CD4-positive, alpha-beta memory T cell (primary cell): ENCODE measurements at regions of chr20 and their contacts with region 1.

Region 1: GRCh38 chr20:4740774-4741431 is 19.2 kb downstream of the PRND start:
- DNase-seq: peak; percentile 43 to 58 (median 52)
- H3K4me3 ChIP-seq: no peak overlapping the region
- H3K4me3 Mint-ChIP-seq: no peak overlapping the region
- H3K27ac ChIP-seq: no peak overlapping the region
- H3K27ac Mint-ChIP-seq: peak overlapping the region in 1 of 7 donors; percentile 9
- H3K4me1 ChIP-seq: no peaks in the 10 kb centered on the region
- H3K4me1 Mint-ChIP-seq: peaks cover 0 to 8% (median under 1%) of the 10 kb centered on the region in 4 donors
- H3K27me3 ChIP-seq: peaks cover under 1% of the 10 kb centered on the region
- H3K27me3 Mint-ChIP-seq: peaks cover 3 to 13% of the 10 kb centered on the region in 2 donors

Region 2: DNA sequence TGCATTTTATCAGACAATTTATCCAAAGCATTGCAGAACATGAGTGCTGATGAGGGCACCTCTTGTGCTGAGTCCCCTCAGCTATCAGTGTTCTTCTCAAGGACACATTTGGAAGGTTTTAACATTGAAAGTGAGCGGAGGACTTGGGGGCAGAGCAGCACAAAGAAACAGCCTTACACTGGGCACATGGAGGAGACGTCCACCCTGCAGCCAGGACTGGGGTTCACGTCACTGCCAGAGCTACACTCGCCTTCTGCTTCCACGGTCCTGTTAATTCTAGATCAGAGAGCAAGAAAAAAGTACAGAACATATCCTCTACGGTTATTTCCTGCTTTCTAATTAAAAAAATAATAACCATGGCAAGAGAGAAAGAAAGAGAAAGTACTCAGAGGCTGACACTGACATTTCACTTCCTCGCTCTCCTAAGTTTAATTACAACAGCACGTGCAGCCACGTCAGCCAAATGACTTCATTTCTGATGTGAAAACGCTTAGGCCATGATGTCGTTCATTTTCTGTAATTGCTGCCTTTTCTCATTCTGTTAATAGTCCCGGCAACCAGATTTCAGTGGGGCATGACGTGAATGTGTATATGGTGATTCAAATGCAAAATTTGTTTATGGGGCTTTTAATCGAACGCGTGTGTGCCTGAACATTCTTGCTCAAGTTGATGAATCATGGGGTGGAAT is 14.0 kb before region 1 on chr20:
- CTCF ChIA-PET with region 1: interaction called, 18 read pairs
- POLR2A ChIA-PET with region 1: no interaction called
- intact Hi-C with region 1: no loop called
- DNase-seq: peak; percentile 51 to 78 (median 63)
- H3K4me3 ChIP-seq: peak overlapping the region in 1 of 2 donors; percentile 29
- H3K4me3 Mint-ChIP-seq: peak overlapping the region; percentile 51 to 82 (median 78)
- H3K27ac ChIP-seq: peak overlapping the region; percentile 30
- H3K27ac Mint-ChIP-seq: peak overlapping the region; percentile 49 to 96 (median 88)
- H3K4me1 ChIP-seq: peaks cover 20% of the 10 kb centered on the region
- H3K4me1 Mint-ChIP-seq: peaks cover 8 to 11% (median 9%) of the 10 kb centered on the region in 4 donors
- H3K27me3 ChIP-seq: no peaks in the 10 kb centered on the region
- H3K27me3 Mint-ChIP-seq: no peaks in the 10 kb centered on the region

Region 3: DNA sequence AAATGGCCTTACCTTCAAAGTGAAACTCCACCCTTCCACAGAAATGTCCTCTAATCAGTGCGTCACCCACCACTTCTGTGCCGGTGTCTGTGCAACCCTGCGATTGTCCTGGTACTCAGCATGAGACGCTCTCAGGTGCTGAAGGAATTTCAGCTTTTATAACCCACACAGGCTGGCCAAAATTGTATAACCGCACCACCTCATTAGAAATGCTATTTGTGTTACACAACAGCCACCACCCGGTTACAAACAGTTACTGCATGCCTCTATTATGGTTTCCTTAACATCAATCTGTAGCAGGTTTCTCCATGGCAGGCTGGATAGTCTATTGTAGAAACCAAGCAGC is 208.9 kb after region 1 on chr20:
- CTCF ChIA-PET with region 1: interaction called, 36 read pairs
- POLR2A ChIA-PET with region 1: no interaction called
- intact Hi-C with region 1: no loop called
- DNase-seq: peak; percentile 32 to 53 (median 42)
- H3K4me3 ChIP-seq: peak overlapping the region in 1 of 2 donors; percentile 20
- H3K4me3 Mint-ChIP-seq: peak overlapping the region; percentile 70 to 84 (median 79)
- H3K27ac ChIP-seq: no peak overlapping the region
- H3K27ac Mint-ChIP-seq: peak overlapping the region; percentile 8 to 94 (median 47)
- H3K4me1 ChIP-seq: peaks cover 6% of the 10 kb centered on the region
- H3K4me1 Mint-ChIP-seq: peaks cover 8 to 26% (median 14%) of the 10 kb centered on the region in 4 donors
- H3K27me3 ChIP-seq: no peaks in the 10 kb centered on the region
- H3K27me3 Mint-ChIP-seq: no peaks in the 10 kb centered on the region

Region 4: DNA sequence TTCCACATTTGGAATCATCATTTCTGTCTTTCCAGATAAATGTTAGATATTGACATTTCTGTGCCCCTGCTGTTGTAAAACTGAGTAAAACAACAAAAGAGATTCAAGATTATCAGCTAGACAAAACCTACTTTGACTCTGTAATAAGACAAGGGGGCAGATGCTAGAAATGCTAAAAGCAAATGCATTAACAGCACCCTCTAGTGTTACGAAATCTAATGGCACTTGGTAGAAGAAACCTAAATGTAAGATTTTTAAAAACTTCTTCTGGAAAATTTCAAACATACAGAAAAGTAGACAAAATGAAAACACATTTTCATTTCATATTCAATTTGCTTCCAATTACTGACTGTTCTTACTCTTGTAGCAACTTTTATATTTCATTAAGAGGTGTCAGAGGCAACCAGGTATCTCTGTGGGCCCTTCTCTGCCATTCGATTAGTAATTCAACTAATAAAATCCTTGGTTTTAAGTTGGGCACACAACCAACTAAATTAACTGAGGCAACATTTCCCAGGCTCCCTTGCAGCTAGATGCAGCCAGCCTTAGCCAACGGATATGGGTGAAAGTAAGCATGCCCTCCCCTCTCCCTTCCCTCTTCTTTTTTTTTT is 215.4 kb after region 1 on chr20:
- CTCF ChIA-PET with region 1: interaction called, 36 read pairs
- POLR2A ChIA-PET with region 1: no interaction called
- intact Hi-C with region 1: loop called (anchors 1 kb)
- DNase-seq: peak in 4 of 5 donors; percentile 47 to 63 (median 56)
- H3K4me3 ChIP-seq: no peak overlapping the region
- H3K4me3 Mint-ChIP-seq: no peak overlapping the region
- H3K27ac ChIP-seq: no peak overlapping the region
- H3K27ac Mint-ChIP-seq: peak overlapping the region in 1 of 7 donors; percentile 19
- H3K4me1 ChIP-seq: peaks cover 3% of the 10 kb centered on the region
- H3K4me1 Mint-ChIP-seq: peaks cover 2 to 11% (median 4%) of the 10 kb centered on the region in 4 donors
- H3K27me3 ChIP-seq: no peaks in the 10 kb centered on the region
- H3K27me3 Mint-ChIP-seq: no peaks in the 10 kb centered on the region

Region 5: DNA sequence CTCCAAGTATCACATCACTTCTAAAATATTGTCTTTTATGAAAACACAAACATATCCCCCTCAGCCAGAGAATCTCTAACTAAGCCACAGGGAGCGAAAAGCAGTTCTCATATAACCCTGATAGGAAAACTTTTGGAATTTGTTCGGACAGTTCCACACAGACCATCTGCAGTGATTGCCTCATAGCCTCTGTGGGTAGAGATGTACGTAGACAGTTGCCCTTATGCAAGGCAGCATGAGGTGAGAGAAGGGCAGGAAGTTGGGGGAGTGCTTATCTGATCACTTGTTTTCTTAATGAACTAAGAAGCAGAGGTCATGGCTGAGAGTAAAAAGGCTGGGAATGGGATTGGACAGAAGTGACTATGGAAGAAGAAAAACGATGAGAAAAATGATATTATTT is 220.8 kb after region 1 on chr20:
- CTCF ChIA-PET with region 1: interaction called, 36 read pairs
- POLR2A ChIA-PET with region 1: no interaction called
- intact Hi-C with region 1: loop called (anchors 1 kb)
- DNase-seq: peak; percentile 28 to 65 (median 36)
- H3K4me3 ChIP-seq: no peak overlapping the region
- H3K4me3 Mint-ChIP-seq: peak overlapping the region in 7 of 8 donors; percentile 56 to 87 (median 73)
- H3K27ac ChIP-seq: peak overlapping the region; percentile 39
- H3K27ac Mint-ChIP-seq: peak overlapping the region; percentile 66 to 97 (median 93)
- H3K4me1 ChIP-seq: peaks cover 19% of the 10 kb centered on the region
- H3K4me1 Mint-ChIP-seq: peaks cover 16 to 25% (median 19%) of the 10 kb centered on the region in 4 donors
- H3K27me3 ChIP-seq: no peaks in the 10 kb centered on the region
- H3K27me3 Mint-ChIP-seq: no peaks in the 10 kb centered on the region